ENCODE measurements at regions of chr12 and their contacts with region 1.

Region 1: DNA sequence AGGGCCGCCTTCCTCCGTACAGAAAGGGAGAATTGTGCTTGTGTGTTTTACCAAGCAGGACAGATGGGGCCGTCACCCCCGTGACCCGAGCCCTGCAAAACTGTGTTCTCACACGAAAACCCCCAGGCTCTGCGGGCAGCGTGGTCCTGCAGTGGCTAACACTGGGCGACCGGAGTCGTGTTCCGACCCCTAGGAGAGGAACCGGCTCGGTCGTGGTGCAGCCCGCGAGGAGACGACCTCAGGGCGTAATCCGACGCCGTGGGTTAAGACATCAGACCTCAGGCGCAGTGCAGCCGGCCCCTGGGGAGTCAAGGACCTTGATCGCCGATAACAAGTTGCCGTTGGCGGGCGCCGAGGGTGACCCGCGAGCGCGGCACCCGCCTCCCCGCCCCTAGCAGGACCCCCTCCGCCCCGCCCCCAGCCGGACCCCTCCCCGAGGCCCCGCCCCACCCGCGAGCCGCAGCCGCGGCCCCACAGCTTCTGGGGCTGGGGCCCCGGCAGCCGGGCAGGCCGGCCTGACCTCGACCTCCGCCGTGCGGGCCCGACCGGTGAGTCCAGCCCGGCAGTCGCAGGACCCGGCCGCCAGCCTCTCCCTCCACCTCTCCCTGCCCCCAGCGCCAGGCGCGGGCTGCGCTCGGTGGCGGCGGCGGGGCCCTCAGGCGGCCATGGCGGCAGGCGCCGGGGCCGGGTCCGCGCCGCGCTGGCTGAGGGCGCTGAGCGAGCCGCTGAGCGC is at the start of gene CHPT1:
- DNase-seq: peak; percentile 81
- ATAC-seq: peak; percentile 84
- H3K4me3 ChIP-seq: peak within 1 kb of the TSS; percentile 97 to 100 (median 99)
- H3K27ac ChIP-seq: peak within 1 kb of the TSS; percentile 98
- H3K4me1 ChIP-seq: peaks cover 55% of the 10 kb centered on the region
- H3K27me3 ChIP-seq: no peaks in the 10 kb centered on the region; a peak in 2 of 5 replicates
- CTCF ChIP-seq: no peak
- EP300 ChIP-seq: 0 out of 4 replicates have a peak, but pooled peaks of 1 of the 2 experiments have one; percentile 39
- POLR2A ChIP-seq: peak; percentile 68 to 73; a peak in 3 of 4 replicates
- RAD21 ChIP-seq: peak; percentile 36; the same call in 1 of the 2 replicates
- total RNA-seq, gene CHPT1: 129 and 178 TPM in 2 replicates

Region 2: DNA sequence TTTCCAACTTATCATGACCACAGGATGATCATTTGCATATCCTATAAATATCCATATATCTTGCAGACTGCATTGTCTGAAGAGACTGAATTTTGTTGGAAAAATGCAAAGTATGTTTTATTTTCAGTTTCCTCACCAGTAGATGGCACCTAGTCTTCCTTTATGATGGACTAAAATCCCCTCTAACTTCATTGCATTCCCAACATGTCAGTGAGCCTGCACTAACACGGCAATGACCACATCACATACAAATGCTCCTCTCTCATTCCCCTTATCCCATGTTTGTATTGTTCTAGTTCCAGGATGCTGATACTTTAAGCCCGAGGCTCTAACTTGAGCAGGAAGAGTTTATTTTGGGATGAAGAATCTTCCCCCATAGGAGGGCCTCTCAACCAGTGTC is 127.3 kb before region 1 on chr12:
- CTCF ChIA-PET with region 1: no interaction called
- POLR2A ChIA-PET with region 1: interaction called, 3 read pairs
- in situ Hi-C with region 1: no loop called
- intact Hi-C with region 1: loop called (anchors 1 kb)
- DNase-seq: peak; percentile 81
- ATAC-seq: peak; percentile 98
- H3K4me3 ChIP-seq: no peak overlapping the region; a peak in 1 of 6 replicates
- H3K27ac ChIP-seq: peak overlapping the region; percentile 19
- H3K4me1 ChIP-seq: peaks cover 27% of the 10 kb centered on the region
- H3K27me3 ChIP-seq: no peaks in the 10 kb centered on the region
- CTCF ChIP-seq: peak; percentile 84
- EP300 ChIP-seq: no peak
- POLR2A ChIP-seq: no peak
- RAD21 ChIP-seq: peak; percentile 76

Region 3: DNA sequence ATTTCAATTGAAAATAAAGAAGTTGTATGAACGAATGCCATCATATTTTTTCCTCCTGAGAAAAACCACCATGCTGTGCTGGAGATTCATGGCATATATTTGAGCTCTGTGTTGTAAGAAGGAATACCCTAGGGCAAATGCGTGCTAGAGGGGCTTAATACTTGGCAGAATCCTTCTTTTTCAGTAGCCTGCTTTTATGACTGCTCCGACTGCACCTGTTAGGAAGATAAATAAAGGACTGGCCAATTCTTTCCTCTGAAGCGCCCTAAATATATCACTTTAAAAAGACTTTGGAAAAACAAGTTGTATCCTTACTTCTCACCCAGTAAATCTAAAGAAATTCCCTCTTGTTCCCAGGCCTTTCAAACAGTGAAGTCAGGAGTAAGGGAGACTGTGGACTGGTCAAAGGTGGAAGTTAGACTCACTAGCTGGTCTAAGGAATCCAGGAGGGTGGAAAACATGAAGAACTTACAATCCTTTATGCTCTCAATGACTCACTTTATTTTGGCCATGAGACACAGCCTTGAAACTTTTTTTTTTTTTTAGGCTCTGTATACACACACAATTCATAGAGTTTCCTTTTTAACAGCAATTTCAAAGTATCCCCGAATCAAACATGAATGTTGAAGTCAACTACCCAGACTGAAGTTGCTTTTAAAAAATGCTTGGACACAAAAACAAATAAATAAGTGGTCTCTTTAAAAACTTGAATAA is 97.4 kb before region 1 on chr12:
- CTCF ChIA-PET with region 1: no interaction called
- POLR2A ChIA-PET with region 1: interaction called, 15 read pairs
- in situ Hi-C with region 1: loop called (anchors 10 kb)
- intact Hi-C with region 1: no loop called
- DNase-seq: peak; percentile 90
- ATAC-seq: peak; percentile 86
- H3K4me3 ChIP-seq: peak overlapping the region; percentile 4 to 43 (median 42); a peak in 5 of 6 replicates
- H3K27ac ChIP-seq: peak overlapping the region; percentile 91
- H3K4me1 ChIP-seq: peaks cover 71% of the 10 kb centered on the region
- H3K27me3 ChIP-seq: no peaks in the 10 kb centered on the region
- CTCF ChIP-seq: no peak
- EP300 ChIP-seq: peak in 1 of 2 experiments; percentile 83; a peak in 2 of 4 replicates
- POLR2A ChIP-seq: peak in 1 of 2 experiments; percentile 51; a peak in 1 of 4 replicates
- RAD21 ChIP-seq: no peak

Region 4: GRCh38 chr12:101607902-101608742 is 89.2 kb before region 1 on chr12:
- CTCF ChIA-PET with region 1: no interaction called
- POLR2A ChIA-PET with region 1: interaction called, 9 read pairs
- in situ Hi-C with region 1: loop called (anchors 10 kb)
- intact Hi-C with region 1: no loop called
- DNase-seq: peak; percentile 100
- ATAC-seq: peak; percentile 93
- H3K4me3 ChIP-seq: peak overlapping the region in 2 of 3 experiments; percentile 29 to 51; a peak in 3 of 6 replicates
- H3K27ac ChIP-seq: peak overlapping the region; percentile 98
- H3K4me1 ChIP-seq: peaks cover 78% of the 10 kb centered on the region
- H3K27me3 ChIP-seq: no peaks in the 10 kb centered on the region
- CTCF ChIP-seq: no peak
- EP300 ChIP-seq: peak; percentile 94 to 100; a peak in 3 of 4 replicates
- POLR2A ChIP-seq: peak in 1 of 2 experiments; percentile 23; a peak in 2 of 4 replicates
- RAD21 ChIP-seq: peak; percentile 31; the same call in 1 of the 2 replicates

Region 5: GRCh38 chr12:101616027-101616494 is 81.3 kb before region 1 on chr12:
- CTCF ChIA-PET with region 1: no interaction called
- POLR2A ChIA-PET with region 1: interaction called, 6 read pairs
- in situ Hi-C with region 1: no loop called
- intact Hi-C with region 1: loop called (anchors 5 kb)
- DNase-seq: peak; percentile 86
- ATAC-seq: peak; percentile 68
- H3K4me3 ChIP-seq: peak overlapping the region in 2 of 3 experiments; percentile 26 to 35; a peak in 4 of 6 replicates
- H3K27ac ChIP-seq: peak overlapping the region; percentile 74
- H3K4me1 ChIP-seq: peaks cover 78% of the 10 kb centered on the region
- H3K27me3 ChIP-seq: no peaks in the 10 kb centered on the region
- CTCF ChIP-seq: no peak
- EP300 ChIP-seq: peak in 1 of 2 experiments; percentile 76; a peak in 2 of 4 replicates
- POLR2A ChIP-seq: no peak
- RAD21 ChIP-seq: no peak

Region 6: GRCh38 chr12:101670007-101670687 is 27.2 kb before region 1 on chr12:
- CTCF ChIA-PET with region 1: interaction called, 3 read pairs
- POLR2A ChIA-PET with region 1: interaction called, 6 read pairs
- in situ Hi-C with region 1: no loop called
- intact Hi-C with region 1: loop called (anchors 2 kb)
- DNase-seq: peak; percentile 66
- ATAC-seq: peak; percentile 74
- H3K4me3 ChIP-seq: peak overlapping the region in 1 of 3 experiments; percentile 9; a peak in 1 of 6 replicates
- H3K27ac ChIP-seq: peak overlapping the region; percentile 43
- H3K4me1 ChIP-seq: peaks cover 72% of the 10 kb centered on the region
- H3K27me3 ChIP-seq: no peaks in the 10 kb centered on the region
- CTCF ChIP-seq: peak; percentile 77
- EP300 ChIP-seq: no peak
- POLR2A ChIP-seq: no peak
- RAD21 ChIP-seq: peak; percentile 74

Region 7: GRCh38 chr12:101713059-101713682 is 15.8 kb after region 1 on chr12:
- CTCF ChIA-PET with region 1: no interaction called
- POLR2A ChIA-PET with region 1: interaction called, 20 read pairs
- in situ Hi-C with region 1: no loop called
- intact Hi-C with region 1: loop called (anchors 2 kb)
- DNase-seq: peak; percentile 85
- ATAC-seq: peak; percentile 97
- H3K4me3 ChIP-seq: peak overlapping the region; percentile 25 to 51 (median 35)
- H3K27ac ChIP-seq: peak overlapping the region; percentile 70
- H3K4me1 ChIP-seq: peaks cover 62% of the 10 kb centered on the region
- H3K27me3 ChIP-seq: no peaks in the 10 kb centered on the region; a peak in 1 of 5 replicates
- CTCF ChIP-seq: peak; percentile 20; the same call in 1 of the 2 replicates
- EP300 ChIP-seq: peak in 1 of 2 experiments; percentile 77; a peak in 2 of 4 replicates
- POLR2A ChIP-seq: peak in 1 of 2 experiments; percentile 26; a peak in 1 of 4 replicates
- RAD21 ChIP-seq: no peak